Activated CD4-positive, alpha-beta T cell treated with anti-CD3 and anti-CD28 coated beads for 36 hours (primary cell): ENCODE measurements at regions of chr1 and their contacts with region 1.

Region 1: GRCh38 chr1:113904674-113905434 is at the starts of genes AP4B1 and DCLRE1B:
- DNase-seq: peak; percentile 99
- ATAC-seq: peak; percentile 92
- H3K4me3 Mint-ChIP-seq: peak within 1 kb of the TSS; percentile 85
- H3K27ac Mint-ChIP-seq: peak within 1 kb of the TSS; percentile 96
- H3K4me1 Mint-ChIP-seq: peaks cover 55% of the 10 kb centered on the region
- H3K27me3 Mint-ChIP-seq: no peaks in the 10 kb centered on the region
- total RNA-seq, gene AP4B1: 27.7 to 39.2 TPM
- total RNA-seq, gene DCLRE1B: 18.2 to 21.8 TPM

Region 2: DNA sequence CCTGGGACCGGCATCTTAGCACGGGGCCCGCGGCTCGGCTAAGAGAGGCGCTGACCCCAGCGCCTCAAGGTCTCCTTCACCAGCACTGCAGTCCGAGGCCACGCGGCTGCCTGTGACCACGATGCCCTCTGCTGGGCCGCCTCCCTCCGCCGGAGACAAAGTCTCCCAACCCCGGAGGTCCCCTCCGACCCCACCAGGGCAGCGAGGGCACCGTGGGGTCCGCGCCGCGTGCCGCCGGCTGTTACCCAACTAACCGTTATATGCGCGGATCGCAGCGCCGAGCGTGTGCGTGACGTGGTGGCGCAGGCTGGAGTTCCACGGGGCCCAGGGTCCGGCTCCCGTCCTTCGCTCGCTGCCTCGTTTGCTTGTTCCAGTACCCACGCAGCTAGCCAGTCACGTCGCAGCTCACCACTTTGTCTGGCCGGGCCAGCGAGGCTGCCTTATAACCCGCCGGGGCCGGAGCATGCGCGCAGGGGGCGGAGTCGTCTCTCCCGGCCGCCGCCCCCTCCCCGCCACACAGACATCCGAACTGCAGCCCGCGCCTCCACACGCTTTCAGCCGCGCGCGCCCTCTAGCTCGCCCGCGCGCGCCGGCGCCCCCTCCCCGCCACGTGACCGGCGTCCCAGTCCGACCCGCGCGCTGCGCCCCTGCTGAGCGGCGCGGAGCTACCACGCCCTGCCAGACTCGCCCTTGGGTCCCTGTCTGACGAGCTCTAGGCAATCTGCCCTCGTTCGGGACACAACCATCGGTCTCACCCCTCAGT is 948.9 kb before region 1 on chr1 and contains the start of gene SLC16A1:
- CTCF ChIA-PET with region 1: no interaction called
- POLR2A ChIA-PET with region 1: no interaction called
- intact Hi-C with region 1: loop called in 1 of 2 experiments (anchors 10 kb)
- DNase-seq: peak; percentile 96
- ATAC-seq: peak; percentile 75
- H3K4me3 Mint-ChIP-seq: peak within 1 kb of the TSS; percentile 97
- H3K27ac Mint-ChIP-seq: peak within 1 kb of the TSS; percentile 100
- H3K4me1 Mint-ChIP-seq: peaks cover 56% of the 10 kb centered on the region
- H3K27me3 Mint-ChIP-seq: no peaks in the 10 kb centered on the region
- total RNA-seq, gene SLC16A1: 70.0 to 70.4 TPM

Region 3: DNA sequence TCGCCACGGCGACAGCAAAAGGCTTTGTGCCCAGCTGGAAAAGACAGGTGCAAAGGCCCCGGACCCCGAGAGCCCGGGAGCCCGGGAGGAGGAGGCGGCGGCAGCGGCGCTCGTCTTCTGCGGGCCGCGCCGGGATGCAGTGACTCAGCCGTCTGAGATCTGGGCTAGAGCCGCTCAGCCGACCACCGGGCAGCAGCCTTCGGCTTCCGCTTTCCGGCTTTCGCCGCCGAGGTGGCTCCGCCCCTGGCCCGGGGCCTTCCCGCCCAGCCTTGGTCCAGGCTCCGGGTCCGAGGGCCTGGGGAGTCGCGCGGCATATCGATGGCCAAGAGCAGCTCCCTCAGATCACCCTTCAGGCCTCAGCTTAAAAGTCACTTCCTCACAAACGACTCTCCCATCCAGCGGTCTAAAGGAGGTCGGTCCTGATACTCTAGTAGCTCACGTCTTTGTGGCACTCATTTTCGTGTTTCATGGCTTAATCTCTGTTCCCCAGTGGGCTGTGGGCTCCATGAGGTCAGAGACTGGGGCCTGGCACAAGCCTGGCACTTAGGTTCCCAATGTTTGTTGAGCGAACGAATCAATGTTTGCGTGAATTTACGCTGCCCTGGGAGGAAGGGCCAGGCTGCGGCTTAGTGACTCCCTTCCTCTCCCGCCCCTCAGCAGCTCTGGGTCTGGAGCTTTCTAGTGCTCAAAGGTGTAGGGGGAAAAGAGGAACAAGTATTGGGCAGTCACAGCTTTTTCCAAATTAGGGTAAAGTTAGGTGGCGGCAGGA is 145.3 kb before region 1 on chr1 and contains the start of gene PHTF1:
- CTCF ChIA-PET with region 1: no interaction called
- POLR2A ChIA-PET with region 1: no interaction called
- intact Hi-C with region 1: loop called in 1 of 2 experiments (anchors 1 kb)
- DNase-seq: peak; percentile 77
- ATAC-seq: peak; percentile 81
- H3K4me3 Mint-ChIP-seq: peak within 1 kb of the TSS; percentile 81
- H3K27ac Mint-ChIP-seq: peak within 1 kb of the TSS; percentile 94
- H3K4me1 Mint-ChIP-seq: peaks cover 13% of the 10 kb centered on the region
- H3K27me3 Mint-ChIP-seq: no peaks in the 10 kb centered on the region
- total RNA-seq, gene PHTF1: 11.3 to 12.2 TPM

Region 4: DNA sequence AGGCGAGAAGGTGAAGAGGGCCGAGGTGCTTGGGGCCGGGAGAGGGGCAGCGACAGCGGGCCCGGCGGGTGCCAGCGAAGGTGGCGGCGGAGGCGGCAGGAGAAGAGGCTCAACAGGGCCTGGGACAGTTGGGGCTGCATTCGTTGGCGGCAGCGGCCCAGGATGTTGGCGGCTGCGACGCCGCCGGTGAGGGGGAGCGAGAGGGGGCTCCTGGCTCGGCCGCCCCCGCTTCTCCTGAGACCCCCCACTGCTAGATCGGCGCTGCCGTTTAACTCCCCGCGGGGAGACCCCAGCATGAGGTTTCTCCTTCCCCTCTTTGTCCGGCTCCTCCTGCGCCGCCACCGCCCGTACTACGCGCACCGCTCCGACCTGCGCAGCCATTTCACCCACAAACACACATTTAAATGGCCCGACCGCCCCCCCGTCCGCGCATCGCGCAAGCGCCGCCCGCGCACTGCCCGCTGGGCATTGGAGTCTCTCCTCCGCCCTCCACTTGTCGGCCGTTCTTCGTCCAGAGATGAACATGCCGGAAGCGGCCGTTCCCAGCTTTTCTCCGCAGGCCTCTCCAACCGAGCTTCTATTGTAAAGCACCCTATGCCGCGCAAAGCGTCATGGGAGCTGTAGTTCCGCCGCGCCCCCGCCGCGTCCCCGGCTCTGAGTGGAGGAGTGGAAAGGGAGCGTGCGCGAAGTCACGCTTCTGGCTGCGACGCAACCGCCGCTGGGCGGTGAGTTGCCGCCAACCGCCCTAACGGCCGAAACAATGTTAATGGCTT is 92.8 kb before region 1 on chr1 and contains the start of gene RSBN1:
- CTCF ChIA-PET with region 1: interaction called, 11 read pairs
- POLR2A ChIA-PET with region 1: interaction called, 5 read pairs
- intact Hi-C with region 1: loop called (anchors 1 to 2 kb)
- DNase-seq: peak; percentile 99
- ATAC-seq: peak; percentile 97
- H3K4me3 Mint-ChIP-seq: peak within 1 kb of the TSS; percentile 97
- H3K27ac Mint-ChIP-seq: peak within 1 kb of the TSS; percentile 97
- H3K4me1 Mint-ChIP-seq: peaks cover 33% of the 10 kb centered on the region
- H3K27me3 Mint-ChIP-seq: no peaks in the 10 kb centered on the region
- total RNA-seq, gene RSBN1: 22.1 to 24.3 TPM

Region 5: GRCh38 chr1:113871597-113872113 is 33.2 kb before region 1 on chr1 and contains the start of gene PTPN22:
- CTCF ChIA-PET with region 1: interaction called, 15 read pairs
- POLR2A ChIA-PET with region 1: interaction called, 11 read pairs
- intact Hi-C with region 1: loop called (anchors 1 kb)
- DNase-seq: peak; percentile 89
- ATAC-seq: peak; percentile 84
- H3K4me3 Mint-ChIP-seq: peak within 1 kb of the TSS; percentile 84
- H3K27ac Mint-ChIP-seq: peak within 1 kb of the TSS; percentile 99
- H3K4me1 Mint-ChIP-seq: peaks cover 72% of the 10 kb centered on the region
- H3K27me3 Mint-ChIP-seq: no peaks in the 10 kb centered on the region
- total RNA-seq, gene PTPN22: 42.4 to 52.6 TPM

Region 6: GRCh38 chr1:113928941-113929749 is 24.3 kb after region 1 on chr1 and contains the start of gene HIPK1:
- CTCF ChIA-PET with region 1: interaction called, 62 read pairs
- POLR2A ChIA-PET with region 1: interaction called, 78 read pairs
- intact Hi-C with region 1: loop called (anchors 1 kb)
- DNase-seq: peak; percentile 96
- ATAC-seq: peak; percentile 66
- H3K4me3 Mint-ChIP-seq: peak within 1 kb of the TSS; percentile 84
- H3K27ac Mint-ChIP-seq: peak within 1 kb of the TSS; percentile 99
- H3K4me1 Mint-ChIP-seq: peaks cover 41% of the 10 kb centered on the region
- H3K27me3 Mint-ChIP-seq: no peaks in the 10 kb centered on the region
- total RNA-seq, gene HIPK1: 42.2 to 50.3 TPM

Region 7: GRCh38 chr1:114250683-114251572 is 346.1 kb after region 1 on chr1:
- CTCF ChIA-PET with region 1: no interaction called
- POLR2A ChIA-PET with region 1: no interaction called
- intact Hi-C with region 1: no loop called
- DNase-seq: no peak
- ATAC-seq: no peak
- H3K4me3 Mint-ChIP-seq: no peak overlapping the region
- H3K27ac Mint-ChIP-seq: no peak overlapping the region
- H3K4me1 Mint-ChIP-seq: no peaks in the 10 kb centered on the region
- H3K27me3 Mint-ChIP-seq: no peaks in the 10 kb centered on the region

Region 8: DNA sequence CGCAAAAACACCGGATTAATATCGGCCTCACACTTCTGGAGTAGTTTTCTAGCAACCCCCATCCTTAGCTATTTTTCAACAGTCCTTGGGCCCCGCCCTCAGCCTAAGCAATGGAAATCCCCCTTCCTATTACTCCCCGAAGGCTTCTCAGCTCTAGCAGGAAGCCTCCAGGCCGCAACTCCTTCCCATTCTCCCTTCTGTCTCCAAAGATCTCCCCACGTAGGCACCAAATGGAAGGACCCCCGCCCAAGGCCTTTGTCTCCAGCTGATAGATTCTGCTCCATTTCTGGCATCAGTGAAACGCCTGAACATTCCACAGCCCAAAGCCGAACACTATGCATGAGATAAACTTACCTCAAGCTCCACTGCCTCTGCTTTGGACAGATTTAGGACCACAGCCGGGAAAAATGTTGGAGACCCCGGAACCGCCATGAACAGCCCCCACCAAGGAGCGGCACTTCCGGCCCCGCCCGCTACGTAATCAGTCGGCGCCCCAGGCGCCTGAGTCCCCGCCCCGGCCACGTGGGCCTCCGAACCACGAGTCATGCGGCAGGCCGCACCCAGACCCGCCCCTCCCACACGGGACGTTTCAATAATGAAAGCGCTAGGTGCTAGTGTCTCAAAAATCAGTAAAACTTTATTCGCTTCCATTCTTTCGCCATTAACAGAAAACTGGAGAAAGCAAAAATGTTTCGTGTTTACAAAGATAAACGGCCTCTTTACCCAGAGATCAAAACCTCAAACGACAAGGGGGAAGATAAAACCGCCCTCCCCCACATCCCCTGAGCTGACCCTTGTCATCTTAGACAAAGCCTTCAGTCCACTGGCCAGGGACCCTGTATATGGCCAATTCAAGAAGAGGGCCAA is 811.7 kb after region 1 on chr1 and contains the start of gene NRAS:
- CTCF ChIA-PET with region 1: no interaction called
- POLR2A ChIA-PET with region 1: no interaction called
- intact Hi-C with region 1: loop called in 1 of 2 experiments (anchors 1 kb)
- DNase-seq: peak; percentile 97
- ATAC-seq: peak; percentile 91
- H3K4me3 Mint-ChIP-seq: peak within 1 kb of the TSS; percentile 95
- H3K27ac Mint-ChIP-seq: peak within 1 kb of the TSS; percentile 97
- H3K4me1 Mint-ChIP-seq: peaks cover 30% of the 10 kb centered on the region
- H3K27me3 Mint-ChIP-seq: no peaks in the 10 kb centered on the region
- total RNA-seq, gene NRAS: 53.0 to 55.0 TPM